ENCODE measurements at regions of chr7 and their contacts with region 1.

Region 1: GRCh38 chr7:48088559-48089045 is 463 bp upstream of the UPP1 start:
- DNase-seq: peak; percentile 86 to 97 (median 90)
- H3K4me3 ChIP-seq: peak overlapping the region; percentile 36 to 93 (median 57)
- H3K4me3 Mint-ChIP-seq: peak overlapping the region; percentile 88 to 92
- H3K27ac ChIP-seq: peak overlapping the region; percentile 97 to 99
- H3K27ac Mint-ChIP-seq: peak overlapping the region; percentile 97 to 100 (median 100)
- H3K4me1 ChIP-seq: peaks cover 60 to 81% of the 10 kb centered on the region in 2 donors
- H3K4me1 Mint-ChIP-seq: peaks cover 75% of the 10 kb centered on the region
- H3K27me3 ChIP-seq: no peaks in the 10 kb centered on the region
- H3K27me3 Mint-ChIP-seq: peaks cover 0 to 2% (median 0%) of the 10 kb centered on the region in 3 donors
- CTCF ChIP-seq: no peak

Region 2: DNA sequence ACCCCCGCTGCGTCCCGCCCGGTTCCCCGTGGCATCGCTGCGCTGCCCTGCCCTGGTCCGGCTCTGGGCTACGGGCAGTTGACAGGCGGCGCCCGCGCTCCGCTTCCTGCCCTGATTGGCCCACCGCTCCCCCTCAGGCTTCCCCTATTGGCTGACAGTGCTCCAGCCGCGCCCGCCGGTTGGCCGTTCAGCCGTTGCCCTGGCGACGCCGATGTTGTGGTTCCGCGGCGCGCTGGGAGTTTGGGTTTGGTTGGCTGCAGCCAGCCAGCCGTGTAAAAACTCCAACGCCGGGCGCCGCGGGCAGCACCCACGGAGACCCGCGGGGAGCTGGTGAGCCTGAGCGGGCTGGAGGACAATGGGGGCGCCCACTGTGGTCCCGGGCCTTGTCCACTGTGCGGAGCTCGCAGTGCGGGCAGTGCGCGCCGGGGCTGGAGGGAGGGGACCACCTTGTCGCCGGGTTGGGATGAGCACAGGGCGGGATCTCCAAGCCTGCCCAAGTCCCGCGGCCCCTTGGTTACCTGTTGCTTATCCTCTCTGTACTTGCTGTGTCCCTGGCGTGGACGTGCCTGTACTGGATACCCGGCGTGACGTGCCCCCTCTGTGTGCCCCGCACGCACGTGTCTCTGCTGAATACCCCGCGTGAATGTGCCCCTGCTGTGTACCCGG is 53.2 kb before region 1 on chr7 and contains the start of gene C7orf57:
- intact Hi-C with region 1: loop called (anchors 5 kb)
- DNase-seq: peak; percentile 89 to 95 (median 91)
- H3K4me3 ChIP-seq: peak within 1 kb of the TSS; percentile 39 to 78 (median 45)
- H3K4me3 Mint-ChIP-seq: peak within 1 kb of the TSS; percentile 78 to 92
- H3K27ac ChIP-seq: no peak within 1 kb of the TSS
- H3K27ac Mint-ChIP-seq: peak within 1 kb of the TSS in 6 of 7 donors; percentile 10 to 90 (median 78)
- H3K4me1 ChIP-seq: peaks cover 10 to 15% of the 10 kb centered on the region in 2 donors
- H3K4me1 Mint-ChIP-seq: peaks cover 12% of the 10 kb centered on the region
- H3K27me3 ChIP-seq: peaks cover 27 to 54% of the 10 kb centered on the region in 2 donors
- H3K27me3 Mint-ChIP-seq: peaks cover 47 to 61% (median 59%) of the 10 kb centered on the region in 3 donors
- CTCF ChIP-seq: no peak
- polyA plus RNA-seq, gene C7orf57: 0.05 TPM in 1 of 3 donors, not detected in the others

Measured in CD14-positive monocyte (primary cell).